ENCODE measurements at regions of chr3 and their contacts with region 1.

Region 1: GRCh38 chr3:31157046-31157693 is 262.7 kb upstream of the GADL1 start:
- DNase-seq: no peak
- H3K4me3 ChIP-seq: no peak overlapping the region
- H3K27ac ChIP-seq: no peak overlapping the region
- H3K4me1 ChIP-seq: no peaks in the 10 kb centered on the region
- H3K27me3 ChIP-seq: no peaks in the 10 kb centered on the region
- CTCF ChIP-seq: no peak

Region 2: DNA sequence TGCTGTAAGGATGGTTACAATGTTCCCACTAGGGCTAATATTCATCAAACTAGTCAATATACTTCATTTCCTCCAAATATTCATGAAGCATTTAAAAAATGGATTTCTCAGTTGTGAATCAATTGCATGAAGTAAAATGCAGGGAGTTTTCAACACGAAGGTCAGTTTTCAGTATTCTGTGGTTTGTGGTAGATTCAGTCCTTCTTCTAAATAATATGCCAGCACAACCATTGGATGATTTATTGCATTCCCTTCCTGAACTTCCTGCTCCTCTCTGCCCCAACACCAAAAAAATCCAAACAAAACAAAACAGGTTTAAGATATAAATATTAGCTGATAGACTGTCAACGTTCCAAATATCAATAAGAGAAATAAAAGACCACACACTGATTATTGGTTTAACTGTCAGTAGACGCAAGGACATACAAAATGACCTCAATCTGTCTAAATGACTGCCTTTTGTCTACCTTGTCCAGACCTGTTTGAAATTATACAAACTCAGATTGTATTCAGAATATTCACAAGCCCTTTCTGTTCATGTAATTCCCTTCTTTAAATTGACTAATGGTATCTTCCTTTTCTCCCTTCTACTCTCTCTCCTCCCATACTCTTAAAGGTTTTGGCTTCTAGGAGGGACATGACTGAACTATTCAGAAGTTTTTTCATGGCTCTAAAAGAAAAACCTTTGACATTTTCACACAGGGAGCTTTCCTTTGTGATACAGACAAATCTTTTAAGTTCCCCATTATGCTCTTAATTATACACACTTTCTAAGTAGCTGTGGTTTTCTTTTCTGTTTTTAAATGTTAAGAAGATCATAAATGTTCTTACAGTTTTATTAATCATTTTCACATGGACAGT is 282.9 kb after region 1 on chr3:
- CTCF ChIA-PET with region 1: no interaction called
- dilution Hi-C with region 1: no loop called
- in situ Hi-C with region 1: no loop called
- intact Hi-C with region 1: loop called (anchors 5 kb)
- DNase-seq: no peak
- H3K4me3 ChIP-seq: no peak overlapping the region
- H3K27ac ChIP-seq: no peak overlapping the region
- H3K4me1 ChIP-seq: no peaks in the 10 kb centered on the region
- H3K27me3 ChIP-seq: no peaks in the 10 kb centered on the region
- CTCF ChIP-seq: no peak